IMR-90 (cell line): ENCODE measurements at regions of chr2 and their contacts with region 1.

Region 1: DNA sequence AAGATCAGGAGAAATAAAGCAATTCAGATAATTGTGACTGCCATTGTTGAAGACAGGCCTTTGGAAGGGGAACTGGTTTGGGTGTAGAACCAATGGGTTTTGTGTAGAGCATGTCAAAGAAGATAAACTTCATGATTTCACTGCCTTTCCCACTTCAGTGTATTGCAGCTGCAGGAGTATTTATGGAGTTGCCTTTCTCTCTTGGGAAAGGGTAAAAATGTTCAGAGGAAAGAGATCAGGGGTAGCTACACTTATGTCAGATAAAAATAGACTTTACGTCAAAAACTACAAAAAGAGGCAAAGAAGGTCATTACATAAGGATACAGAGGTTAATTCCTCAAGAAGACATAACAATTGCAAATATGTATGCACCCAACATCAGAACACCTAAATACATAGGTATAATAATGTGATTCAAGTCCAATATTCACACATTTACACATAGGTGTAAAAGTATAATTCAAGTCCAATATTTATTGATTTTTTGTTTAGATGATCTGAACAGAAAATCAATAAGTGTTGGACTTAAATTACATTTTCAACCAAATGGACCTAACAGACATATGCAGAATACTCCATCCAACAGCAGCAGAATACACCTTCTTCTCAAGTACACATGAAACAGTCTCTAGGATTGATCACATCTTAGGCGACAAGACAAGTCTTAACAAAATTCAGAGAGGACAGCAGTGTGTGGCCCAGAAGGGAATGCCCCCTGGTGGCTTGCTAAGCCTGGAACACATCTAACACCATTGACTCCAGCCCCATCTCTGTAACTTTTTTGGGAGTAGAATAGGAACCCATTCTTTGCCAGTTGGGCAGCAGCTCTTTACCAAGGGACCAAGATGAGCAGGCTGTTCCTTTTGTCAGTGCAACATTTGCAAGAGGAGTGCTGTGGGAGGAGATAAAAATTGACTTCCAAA is 249.6 kb downstream of the PLCL1 start:
- DNase-seq: peak; percentile 37
- ATAC-seq: peak; percentile 68
- H3K4me3 ChIP-seq: no peak overlapping the region
- H3K27ac ChIP-seq: no peak overlapping the region
- H3K4me1 ChIP-seq: no peaks in the 10 kb centered on the region
- H3K27me3 ChIP-seq: no peaks in the 10 kb centered on the region
- CTCF ChIP-seq: peak; percentile 54
- POLR2A ChIP-seq: no peak
- RAD21 ChIP-seq: peak; percentile 51

Region 2: GRCh38 chr2:198296665-198297308 is 242.8 kb after region 1 on chr2:
- CTCF ChIA-PET with region 1: no interaction called
- POLR2A ChIA-PET with region 1: no interaction called
- dilution Hi-C with region 1: no loop called
- in situ Hi-C with region 1: no loop called
- intact Hi-C with region 1: loop called (anchors 1 kb)
- DNase-seq: peak; percentile 40
- ATAC-seq: peak; percentile 92
- H3K4me3 ChIP-seq: no peak overlapping the region
- H3K27ac ChIP-seq: no peak overlapping the region
- H3K4me1 ChIP-seq: no peaks in the 10 kb centered on the region
- H3K27me3 ChIP-seq: peaks cover 1% of the 10 kb centered on the region; the same call in 1 of the 2 replicates
- CTCF ChIP-seq: peak; percentile 63
- POLR2A ChIP-seq: no peak
- RAD21 ChIP-seq: peak; percentile 67